ENCODE measurements at regions of chr16 and their contacts with region 1.

Region 1: GRCh38 chr16:10009684-10010083 is 172.5 kb downstream of the GRIN2A start:
- DNase-seq: no peak
- H3K4me3 ChIP-seq: no peak overlapping the region
- H3K27ac ChIP-seq: no peak overlapping the region
- H3K4me1 ChIP-seq: no peaks in the 10 kb centered on the region
- H3K27me3 ChIP-seq: no peaks in the 10 kb centered on the region
- CTCF ChIP-seq: no peak
- POLR2A ChIP-seq: no peak

Region 2: DNA sequence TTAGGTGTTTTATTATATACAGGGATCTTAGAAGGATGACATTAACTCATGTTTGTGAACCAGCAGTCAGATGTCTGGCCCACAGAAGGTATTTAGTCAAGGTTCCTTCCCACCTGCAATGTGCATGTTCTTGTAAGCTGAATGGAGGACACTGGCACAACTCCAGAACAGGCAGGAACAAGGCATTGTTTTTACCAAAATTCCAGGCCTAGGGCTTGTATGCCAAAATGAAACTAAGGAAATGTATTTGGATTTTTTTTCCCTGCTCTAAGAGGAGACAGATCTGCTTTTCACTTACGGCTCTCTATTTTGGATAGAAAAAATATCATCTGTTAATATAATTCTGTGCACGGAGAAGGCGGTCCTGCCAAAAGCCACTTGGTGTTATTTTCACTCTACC is 139.9 kb before region 1 on chr16:
- intact Hi-C with region 1: loop called (anchors 5 kb)
- DNase-seq: no peak
- H3K4me3 ChIP-seq: no peak overlapping the region
- H3K27ac ChIP-seq: no peak overlapping the region
- H3K4me1 ChIP-seq: no peaks in the 10 kb centered on the region
- H3K27me3 ChIP-seq: no peaks in the 10 kb centered on the region
- CTCF ChIP-seq: no peak
- POLR2A ChIP-seq: no peak

Region 3: DNA sequence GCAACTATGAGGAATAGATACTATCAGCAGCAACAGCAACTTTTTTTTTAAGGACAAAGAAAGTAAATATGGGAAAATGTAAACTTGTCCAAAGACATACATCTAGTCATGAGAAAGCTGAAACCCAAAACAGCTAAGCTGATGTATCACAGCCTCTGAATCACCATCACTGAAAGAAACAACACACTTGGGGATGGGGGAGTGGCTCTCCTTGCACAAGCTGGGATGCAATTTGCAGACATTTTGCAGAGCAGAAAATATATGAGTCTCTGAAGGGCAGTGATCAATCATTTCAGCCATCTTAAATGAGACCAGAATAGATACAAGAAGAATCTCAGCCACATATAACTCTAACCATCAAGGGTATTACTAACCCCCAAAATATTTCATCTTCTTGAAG is 93.4 kb after region 1 on chr16:
- intact Hi-C with region 1: no loop called
- DNase-seq: no peak
- H3K4me3 ChIP-seq: no peak overlapping the region
- H3K27ac ChIP-seq: no peak overlapping the region
- H3K4me1 ChIP-seq: no peaks in the 10 kb centered on the region
- H3K27me3 ChIP-seq: no peaks in the 10 kb centered on the region
- CTCF ChIP-seq: no peak
- POLR2A ChIP-seq: no peak

Region 4: GRCh38 chr16:10138881-10139280 is 129.2 kb after region 1 on chr16:
- intact Hi-C with region 1: no loop called
- DNase-seq: no peak
- H3K4me3 ChIP-seq: no peak overlapping the region
- H3K27ac ChIP-seq: no peak overlapping the region
- H3K4me1 ChIP-seq: no peaks in the 10 kb centered on the region
- H3K27me3 ChIP-seq: no peaks in the 10 kb centered on the region
- CTCF ChIP-seq: no peak
- POLR2A ChIP-seq: no peak

Measured in prostate gland (tissue), 2 donors.